Common myeloid progenitor, CD34-positive (primary cell): ENCODE measurements at regions of chr18 and their contacts with region 1.

Region 1: GRCh38 chr18:23828426-23828825 is 139.2 kb downstream of the LAMA3 start:
- DNase-seq: peak; percentile 92 to 98 (median 95)
- H3K4me3 ChIP-seq: no peak overlapping the region
- H3K27ac ChIP-seq: peak overlapping the region; percentile 84 to 90
- H3K4me1 ChIP-seq: peaks cover 20 to 54% (median 38%) of the 10 kb centered on the region in 4 experiments
- H3K27me3 ChIP-seq: no peaks in the 10 kb centered on the region

Region 2: DNA sequence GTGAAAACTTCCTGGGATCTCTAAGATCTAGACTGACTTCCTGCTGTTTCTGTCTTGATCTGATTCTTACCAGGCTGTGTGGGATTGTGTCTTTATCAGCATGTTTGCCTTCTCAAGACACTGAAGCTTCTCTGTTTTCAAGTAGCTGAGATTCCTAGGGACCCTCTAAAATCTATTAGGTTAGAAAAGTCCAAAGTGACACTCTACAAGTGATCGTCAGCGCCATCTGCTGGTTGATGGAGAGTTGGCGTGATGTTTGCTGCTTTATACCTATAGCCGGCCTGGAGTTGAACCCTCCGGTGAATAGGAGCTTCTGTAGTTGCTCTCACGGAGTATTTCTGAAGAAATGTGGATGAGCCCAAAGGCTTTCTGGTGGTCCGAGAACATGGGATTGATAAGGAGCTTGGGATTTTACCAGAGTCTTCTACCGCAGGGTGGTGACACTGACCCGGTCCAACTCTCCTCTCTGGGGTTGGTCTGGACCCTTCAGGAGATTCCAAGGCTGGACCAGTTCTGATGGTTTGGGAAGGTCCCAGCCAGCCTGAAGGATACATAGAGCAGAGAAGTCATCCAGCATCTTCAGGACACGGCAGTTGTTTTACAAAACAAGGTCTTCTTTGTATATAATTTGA is 90.1 kb after region 1 on chr18:
- CTCF ChIA-PET with region 1: interaction called, 20 read pairs
- POLR2A ChIA-PET with region 1: no interaction called
- DNase-seq: peak; percentile 71 to 87 (median 80)
- H3K4me3 ChIP-seq: no peak overlapping the region
- H3K27ac ChIP-seq: no peak overlapping the region
- H3K4me1 ChIP-seq: peaks cover 0 to 3% (median 0%) of the 10 kb centered on the region in 4 experiments
- H3K27me3 ChIP-seq: peaks cover 0 to 2% (median 0%) of the 10 kb centered on the region in 5 experiments

Region 3: DNA sequence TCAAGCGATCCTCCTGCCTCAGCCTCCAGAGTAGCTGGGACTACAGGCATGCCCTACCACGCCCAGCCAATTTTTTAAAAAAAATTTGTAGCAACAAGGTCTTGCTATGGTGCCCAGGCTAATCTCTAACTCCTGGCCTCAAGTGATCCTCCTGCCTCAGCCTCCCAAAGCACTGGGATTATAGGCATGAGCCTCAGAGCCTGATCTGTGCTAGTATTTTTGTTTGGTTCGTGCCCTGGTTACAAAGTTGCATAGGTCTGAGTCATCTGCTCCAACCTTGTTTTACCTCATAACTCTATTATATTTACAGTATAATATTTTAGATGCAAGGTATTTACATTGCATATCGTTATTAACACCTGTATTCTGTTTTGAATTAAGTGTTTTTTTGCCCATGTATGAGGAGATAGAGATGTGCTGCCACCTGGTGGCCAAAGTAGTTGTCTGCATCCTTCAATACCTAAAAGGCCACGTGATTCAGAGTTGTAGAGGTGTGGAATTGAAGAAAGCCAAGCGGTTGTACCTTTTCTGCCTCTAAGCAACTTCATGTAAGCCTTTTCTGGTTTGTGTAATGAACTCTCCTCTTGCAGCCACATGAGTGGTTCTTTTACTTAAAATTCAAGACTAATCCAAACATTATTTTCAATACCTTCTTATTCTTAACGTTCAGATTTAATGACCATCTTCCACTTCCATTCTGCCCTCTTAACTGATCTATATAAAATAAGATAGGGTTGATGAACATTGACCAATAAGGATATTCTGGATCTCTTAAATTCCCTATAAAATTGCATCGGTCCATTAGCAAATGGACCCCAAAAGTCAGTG is 290.5 kb after region 1 on chr18:
- CTCF ChIA-PET with region 1: interaction called, 17 read pairs
- POLR2A ChIA-PET with region 1: no interaction called
- DNase-seq: peak; percentile 78 to 90 (median 83)
- H3K4me3 ChIP-seq: no peak overlapping the region
- H3K27ac ChIP-seq: no peak overlapping the region
- H3K4me1 ChIP-seq: peaks cover 8 to 15% (median 10%) of the 10 kb centered on the region in 4 experiments
- H3K27me3 ChIP-seq: no peaks in the 10 kb centered on the region